ENCODE measurements at regions of chr17 and their contacts with region 1.

Region 1: DNA sequence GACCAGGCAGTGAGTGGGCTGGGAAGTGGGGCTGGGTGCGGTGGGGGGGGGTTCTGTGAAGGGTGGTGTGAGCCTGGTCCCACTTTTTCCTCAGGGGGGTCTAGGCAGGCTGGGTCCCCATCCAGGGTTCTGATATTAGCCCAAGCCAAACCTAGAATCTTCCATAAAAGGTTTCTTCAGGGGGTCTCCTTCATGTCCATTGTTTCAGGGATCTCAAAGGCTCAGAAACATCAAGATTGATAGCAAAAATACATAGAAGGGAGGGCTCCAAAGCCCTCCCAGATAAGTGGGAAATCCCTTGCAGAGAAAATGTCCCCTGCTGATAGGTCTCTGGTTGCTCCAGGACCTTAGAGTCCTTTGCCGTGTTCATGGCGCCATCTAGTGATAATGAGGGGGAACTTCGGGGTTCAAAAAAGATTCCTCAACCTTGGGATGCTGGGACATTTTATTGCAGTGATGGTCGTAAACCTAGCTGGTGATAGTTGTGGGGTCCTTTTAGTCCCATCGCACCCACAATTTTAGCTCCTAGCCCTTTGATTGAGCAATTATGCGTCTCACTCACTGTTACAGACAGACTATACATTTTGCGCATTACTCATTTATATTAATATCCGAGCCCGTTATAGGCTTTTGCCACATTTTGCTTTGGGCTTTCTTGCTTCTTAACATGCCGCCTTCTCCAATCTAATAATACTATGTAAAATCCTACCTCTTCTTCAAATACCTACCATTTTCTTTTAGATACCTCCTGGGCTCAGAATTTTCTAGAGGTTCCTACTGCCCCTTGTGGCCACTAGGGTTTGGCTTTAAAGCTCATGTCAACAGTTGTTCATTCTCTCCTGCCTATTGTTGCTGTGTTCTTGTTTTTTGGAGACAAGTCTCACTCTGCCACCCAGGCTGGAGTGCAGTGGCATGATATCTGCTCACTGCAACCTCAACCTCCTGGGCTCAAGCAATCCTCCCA is 35.1 kb downstream of the IGF2BP1 start:
- DNase-seq: peak; percentile 81
- ATAC-seq: peak; percentile 87
- H3K4me3 ChIP-seq: no peak overlapping the region
- H3K27ac ChIP-seq: no peak overlapping the region
- H3K4me1 ChIP-seq: no peaks in the 10 kb centered on the region
- H3K27me3 ChIP-seq: no peaks in the 10 kb centered on the region
- CTCF ChIP-seq: peak; percentile 97
- POLR2A ChIP-seq: no peak
- RAD21 ChIP-seq: peak; percentile 99

Region 2: GRCh38 chr17:48724251-48725003 is 307.8 kb before region 1 on chr17:
- CTCF ChIA-PET with region 1: no interaction called
- POLR2A ChIA-PET with region 1: no interaction called
- dilution Hi-C with region 1: no loop called
- in situ Hi-C with region 1: loop called (anchors 10 kb)
- intact Hi-C with region 1: loop called (anchors 10 kb)
- DNase-seq: peak; percentile 67
- ATAC-seq: peak; percentile 94
- H3K4me3 ChIP-seq: no peak overlapping the region
- H3K27ac ChIP-seq: no peak overlapping the region
- H3K4me1 ChIP-seq: no peaks in the 10 kb centered on the region
- H3K27me3 ChIP-seq: peaks cover 95% of the 10 kb centered on the region
- CTCF ChIP-seq: peak; percentile 84
- POLR2A ChIP-seq: no peak
- RAD21 ChIP-seq: peak; percentile 80

Region 3: GRCh38 chr17:48816774-48817590 is 215.3 kb before region 1 on chr17 and contains the start of gene TTLL6:
- CTCF ChIA-PET with region 1: no interaction called
- POLR2A ChIA-PET with region 1: no interaction called
- dilution Hi-C with region 1: no loop called
- in situ Hi-C with region 1: no loop called
- intact Hi-C with region 1: loop called (anchors 5 kb)
- DNase-seq: peak; percentile 56
- ATAC-seq: peak; percentile 99
- H3K4me3 ChIP-seq: peak within 1 kb of the TSS; percentile 41
- H3K27ac ChIP-seq: no peak within 1 kb of the TSS
- H3K4me1 ChIP-seq: 0 out of 2 replicates have a peak, but pooled peaks cover 2% of the 10 kb centered on the region
- H3K27me3 ChIP-seq: peaks cover 31% of the 10 kb centered on the region
- CTCF ChIP-seq: no peak
- POLR2A ChIP-seq: no peak
- RAD21 ChIP-seq: no peak
- total RNA-seq, gene TTLL6: not detected in 2 replicates

Region 4: DNA sequence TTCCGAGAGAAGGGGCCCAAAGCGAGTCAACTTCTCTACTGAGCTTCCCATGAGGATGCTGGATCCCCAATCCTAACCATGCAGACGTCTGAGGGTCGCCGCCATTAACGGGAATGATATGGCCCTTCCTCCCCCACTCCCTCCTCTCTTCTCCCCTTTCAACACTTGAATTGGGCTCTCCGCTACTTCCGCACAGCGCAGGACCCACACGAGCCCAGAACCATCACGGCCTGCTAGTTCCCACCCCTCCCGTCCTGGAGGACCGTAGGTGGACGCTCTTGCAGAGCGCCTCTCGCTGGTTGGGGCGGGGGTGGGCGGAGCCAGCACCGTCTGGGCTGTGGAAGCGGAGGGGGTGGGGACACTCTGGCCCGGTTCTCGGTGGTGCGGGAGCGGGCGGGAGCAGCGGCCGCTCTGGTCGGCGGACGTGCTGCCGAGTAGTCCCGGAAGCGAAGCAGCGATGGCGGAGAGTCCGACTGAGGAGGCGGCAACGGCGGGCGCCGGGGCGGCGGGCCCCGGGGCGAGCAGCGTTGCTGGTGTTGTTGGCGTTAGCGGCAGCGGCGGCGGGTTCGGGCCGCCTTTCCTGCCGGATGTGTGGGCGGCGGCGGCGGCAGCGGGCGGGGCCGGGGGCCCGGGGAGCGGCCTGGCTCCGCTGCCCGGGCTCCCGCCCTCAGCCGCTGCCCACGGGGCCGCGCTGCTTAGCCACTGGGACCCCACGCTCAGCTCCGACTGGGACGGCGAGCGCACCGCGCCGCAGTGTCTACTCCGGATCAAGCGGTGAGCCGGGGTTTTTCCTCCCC is 124.0 kb before region 1 on chr17 and contains the start of gene UBE2Z:
- CTCF ChIA-PET with region 1: no interaction called
- POLR2A ChIA-PET with region 1: no interaction called
- dilution Hi-C with region 1: loop called (anchors 25 kb)
- in situ Hi-C with region 1: no loop called
- intact Hi-C with region 1: loop called (anchors 1 kb)
- DNase-seq: peak; percentile 95
- ATAC-seq: peak; percentile 90
- H3K4me3 ChIP-seq: peak within 1 kb of the TSS; percentile 68
- H3K27ac ChIP-seq: peak within 1 kb of the TSS; percentile 96
- H3K4me1 ChIP-seq: peaks cover 13% of the 10 kb centered on the region
- H3K27me3 ChIP-seq: no peaks in the 10 kb centered on the region
- CTCF ChIP-seq: peak; percentile 19; the same call in 1 of the 2 replicates
- POLR2A ChIP-seq: peak; percentile 96
- RAD21 ChIP-seq: no peak
- total RNA-seq, gene UBE2Z: 68.5 and 76.1 TPM in 2 replicates

Region 5: GRCh38 chr17:48944519-48945260 is 87.6 kb before region 1 on chr17 and contains the start of gene SNF8:
- CTCF ChIA-PET with region 1: interaction called, 6 read pairs
- POLR2A ChIA-PET with region 1: interaction called, 3 read pairs
- dilution Hi-C with region 1: no loop called
- in situ Hi-C with region 1: loop called (anchors 5 kb)
- intact Hi-C with region 1: loop called (anchors 1 kb)
- DNase-seq: peak; percentile 88
- ATAC-seq: peak; percentile 98
- H3K4me3 ChIP-seq: peak within 1 kb of the TSS; percentile 88
- H3K27ac ChIP-seq: peak within 1 kb of the TSS; percentile 98
- H3K4me1 ChIP-seq: peaks cover 8% of the 10 kb centered on the region
- H3K27me3 ChIP-seq: no peaks in the 10 kb centered on the region
- CTCF ChIP-seq: no peak
- POLR2A ChIP-seq: peak; percentile 91
- RAD21 ChIP-seq: no peak
- total RNA-seq, gene SNF8: 171 and 191 TPM in 2 replicates

Region 6: DNA sequence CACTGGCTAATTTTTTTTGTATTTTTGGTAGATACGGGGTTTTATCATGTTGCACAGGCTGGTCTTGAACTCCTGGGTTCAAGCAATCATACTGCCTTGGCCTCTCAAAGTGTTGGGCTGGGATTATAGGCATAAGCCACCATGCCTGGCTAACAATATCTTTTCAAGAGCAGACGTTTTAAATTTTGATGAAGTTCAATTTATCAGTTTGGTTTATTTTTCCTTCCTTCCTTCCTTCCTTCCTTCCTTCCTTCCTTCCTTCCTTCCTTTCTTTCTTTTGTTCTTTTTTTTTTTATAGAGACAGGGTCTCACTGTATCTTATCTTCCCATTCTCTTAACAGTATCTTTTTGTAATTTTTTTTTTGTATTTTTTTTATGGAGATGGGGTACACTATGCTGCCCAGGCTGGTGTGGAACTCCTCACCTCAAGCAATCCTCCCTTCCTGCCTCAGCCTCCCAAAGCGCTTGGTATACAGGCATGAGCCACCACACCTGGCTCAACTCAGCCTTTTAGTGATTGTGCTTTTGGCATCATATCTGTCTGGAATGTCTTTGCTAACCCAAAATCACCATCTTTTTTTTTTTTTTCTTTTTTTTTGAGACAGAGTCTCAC is 50.2 kb before region 1 on chr17:
- CTCF ChIA-PET with region 1: no interaction called
- POLR2A ChIA-PET with region 1: no interaction called
- dilution Hi-C with region 1: no loop called
- in situ Hi-C with region 1: no loop called
- intact Hi-C with region 1: no loop called
- DNase-seq: no peak
- ATAC-seq: no peak
- H3K4me3 ChIP-seq: no peak overlapping the region
- H3K27ac ChIP-seq: no peak overlapping the region
- H3K4me1 ChIP-seq: no peaks in the 10 kb centered on the region
- H3K27me3 ChIP-seq: peaks cover 12% of the 10 kb centered on the region
- CTCF ChIP-seq: no peak
- POLR2A ChIP-seq: no peak
- RAD21 ChIP-seq: no peak

Region 7: DNA sequence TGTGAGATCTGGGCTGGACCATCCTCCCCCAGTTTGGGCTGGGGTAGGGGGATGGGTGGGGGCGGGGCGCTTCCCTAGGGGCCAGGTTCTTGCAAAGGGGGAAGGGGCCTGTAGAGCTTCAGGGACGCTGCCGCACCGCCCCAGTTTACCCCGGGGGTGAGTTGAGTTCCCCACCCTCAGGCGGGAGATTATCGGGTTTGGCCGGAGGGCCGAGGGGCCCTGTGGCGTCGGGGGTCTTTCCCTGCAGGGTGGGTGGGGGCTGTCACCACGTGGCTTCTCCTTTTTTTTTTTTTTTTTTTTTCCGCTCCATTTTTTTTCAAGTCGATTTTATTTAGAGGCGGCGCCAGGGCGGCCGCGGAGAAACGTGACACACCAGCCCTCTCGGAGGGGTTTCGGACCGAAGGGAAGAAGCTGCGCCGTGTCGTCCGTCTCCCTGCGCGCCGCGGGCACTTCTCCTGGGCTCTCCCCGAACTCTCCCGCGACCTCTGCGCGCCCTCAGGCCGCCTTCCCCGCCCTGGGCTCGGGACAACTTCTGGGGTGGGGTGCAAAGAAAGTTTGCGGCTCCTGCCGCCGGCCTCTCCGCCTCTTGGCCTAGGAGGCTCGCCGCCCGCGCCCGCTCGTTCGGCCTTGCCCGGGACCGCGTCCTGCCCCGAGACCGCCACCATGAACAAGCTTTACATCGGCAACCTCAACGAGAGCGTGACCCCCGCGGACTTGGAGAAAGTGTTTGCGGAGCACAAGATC is 35.0 kb before region 1 on chr17 and contains the start of gene IGF2BP1:
- CTCF ChIA-PET with region 1: interaction called, 16 read pairs
- POLR2A ChIA-PET with region 1: interaction called, 18 read pairs
- dilution Hi-C with region 1: no loop called
- in situ Hi-C with region 1: no loop called
- intact Hi-C with region 1: loop called (anchors 1 kb)
- DNase-seq: peak; percentile 78
- ATAC-seq: peak; percentile 50
- H3K4me3 ChIP-seq: peak within 1 kb of the TSS; percentile 93
- H3K27ac ChIP-seq: peak within 1 kb of the TSS; percentile 95
- H3K4me1 ChIP-seq: no peaks in the 10 kb centered on the region
- H3K27me3 ChIP-seq: peaks cover 20% of the 10 kb centered on the region
- CTCF ChIP-seq: no peak
- POLR2A ChIP-seq: no peak
- RAD21 ChIP-seq: no peak
- total RNA-seq, gene IGF2BP1: 10.2 and 11.9 TPM in 2 replicates

Measured in IMR-90 (cell line).